Esophagus muscularis mucosa (tissue), 4 donors: ENCODE measurements at regions of chrX and their contacts with region 1.

Region 1: GRCh38 chrX:110450050-110450449 is 91.4 kb downstream of the RTL9 start:
- DNase-seq: peak; percentile 92
- H3K4me3 ChIP-seq: no peak overlapping the region
- H3K27ac ChIP-seq: no peak overlapping the region
- H3K4me1 ChIP-seq: no peaks in the 10 kb centered on the region
- H3K27me3 ChIP-seq: peaks cover 0 to 5% (median 0%) of the 10 kb centered on the region in 4 donors
- CTCF ChIP-seq: peak; percentile 71 to 76 (median 73)
- EP300 ChIP-seq: no peak
- POLR2A ChIP-seq: no peak

Region 2: GRCh38 chrX:110167952-110168451 is 282.0 kb before region 1 on chrX:
- intact Hi-C with region 1: no loop called
- DNase-seq: no peak
- H3K4me3 ChIP-seq: no peak overlapping the region
- H3K27ac ChIP-seq: no peak overlapping the region
- H3K4me1 ChIP-seq: no peaks in the 10 kb centered on the region
- H3K27me3 ChIP-seq: no peaks in the 10 kb centered on the region
- CTCF ChIP-seq: peak; percentile 16 to 46 (median 17)
- EP300 ChIP-seq: no peak
- POLR2A ChIP-seq: no peak

Region 3: GRCh38 chrX:110327336-110327735 is 122.7 kb before region 1 on chrX:
- intact Hi-C with region 1: no loop called
- DNase-seq: no peak
- H3K4me3 ChIP-seq: no peak overlapping the region
- H3K27ac ChIP-seq: no peak overlapping the region
- H3K4me1 ChIP-seq: no peaks in the 10 kb centered on the region
- H3K27me3 ChIP-seq: no peaks in the 10 kb centered on the region
- CTCF ChIP-seq: no peak
- EP300 ChIP-seq: no peak
- POLR2A ChIP-seq: no peak

Region 4: GRCh38 chrX:110412971-110413721 is 36.9 kb before region 1 on chrX:
- intact Hi-C with region 1: no loop called
- DNase-seq: no peak
- H3K4me3 ChIP-seq: peak overlapping the region in 1 of 4 donors; percentile 29
- H3K27ac ChIP-seq: no peak overlapping the region
- H3K4me1 ChIP-seq: peaks cover 0 to 9% (median 3%) of the 10 kb centered on the region in 4 donors
- H3K27me3 ChIP-seq: peaks cover 0 to 7% (median 0%) of the 10 kb centered on the region in 4 donors
- CTCF ChIP-seq: peak; percentile 63 to 79 (median 76)
- EP300 ChIP-seq: no peak
- POLR2A ChIP-seq: no peak

Region 5: DNA sequence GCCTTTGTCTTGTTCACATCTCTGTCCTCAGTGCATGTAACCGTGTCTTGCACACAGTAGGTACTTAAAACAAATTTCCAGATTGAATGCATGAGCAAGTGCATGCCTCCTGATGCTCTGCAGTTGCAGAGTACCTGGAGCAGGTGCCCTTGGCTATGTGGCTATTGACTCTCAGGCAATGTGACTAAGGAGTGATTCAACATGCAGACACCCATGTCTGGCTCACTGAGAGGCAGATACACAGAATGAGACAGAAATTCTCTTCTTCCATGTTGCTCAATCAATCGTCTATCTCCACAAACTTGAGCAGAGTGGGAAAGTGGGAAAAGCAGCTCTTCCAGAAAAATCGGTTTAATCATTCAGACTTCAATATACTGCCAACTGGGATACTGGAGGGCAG is 234.6 kb after region 1 on chrX:
- intact Hi-C with region 1: no loop called
- DNase-seq: no peak
- H3K4me3 ChIP-seq: no peak overlapping the region
- H3K27ac ChIP-seq: no peak overlapping the region
- H3K4me1 ChIP-seq: no peaks in the 10 kb centered on the region
- H3K27me3 ChIP-seq: no peaks in the 10 kb centered on the region
- CTCF ChIP-seq: no peak
- EP300 ChIP-seq: no peak
- POLR2A ChIP-seq: no peak

Region 6: DNA sequence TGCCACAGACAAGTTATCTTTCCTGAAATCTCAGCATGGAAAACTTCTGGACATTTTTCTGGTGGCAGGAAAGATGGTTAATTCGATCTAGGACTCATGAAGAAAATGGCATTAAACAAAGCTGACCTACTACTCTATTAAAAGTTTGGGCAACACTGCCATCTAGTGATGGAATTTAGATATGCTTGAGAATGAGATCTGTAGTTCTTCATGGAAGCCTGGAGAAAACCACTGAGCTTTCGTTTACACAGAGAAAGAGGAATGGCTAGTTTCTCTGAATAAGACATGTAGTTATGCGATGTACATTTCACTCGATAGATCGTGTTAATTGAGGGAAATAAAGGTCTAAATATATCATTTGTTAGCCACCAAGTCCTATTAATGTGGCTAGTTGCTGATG is 397.3 kb after region 1 on chrX:
- intact Hi-C with region 1: loop called (anchors 1 kb)
- DNase-seq: no peak
- H3K4me3 ChIP-seq: no peak overlapping the region
- H3K27ac ChIP-seq: no peak overlapping the region
- H3K4me1 ChIP-seq: peaks cover 0 to 7% (median 0%) of the 10 kb centered on the region in 4 donors
- H3K27me3 ChIP-seq: peaks cover 0 to 4% (median 0%) of the 10 kb centered on the region in 4 donors
- CTCF ChIP-seq: peak; percentile 55 to 72 (median 65)
- EP300 ChIP-seq: no peak
- POLR2A ChIP-seq: no peak